A673 (cell line): ENCODE measurements at regions of chr4 and their contacts with region 1.

Region 1: GRCh38 chr4:47562297-47562696 is 77.2 kb downstream of the ATP10D start:
- DNase-seq: no peak
- H3K4me3 ChIP-seq: no peak overlapping the region
- H3K27ac ChIP-seq: no peak overlapping the region
- H3K4me1 ChIP-seq: no peaks in the 10 kb centered on the region
- H3K27me3 ChIP-seq: no peaks in the 10 kb centered on the region
- CTCF ChIP-seq: no peak

Region 2: GRCh38 chr4:46844325-46844917 is 717.9 kb before region 1 on chr4:
- CTCF ChIA-PET with region 1: no interaction called
- POLR2A ChIA-PET with region 1: no interaction called
- intact Hi-C with region 1: loop called (anchors 10 kb)
- DNase-seq: peak; percentile 79
- H3K4me3 ChIP-seq: no peak overlapping the region
- H3K27ac ChIP-seq: no peak overlapping the region
- H3K4me1 ChIP-seq: no peaks in the 10 kb centered on the region
- H3K27me3 ChIP-seq: no peaks in the 10 kb centered on the region
- CTCF ChIP-seq: peak; percentile 81

Region 3: GRCh38 chr4:46931981-46932380 is 630.3 kb before region 1 on chr4:
- CTCF ChIA-PET with region 1: no interaction called
- POLR2A ChIA-PET with region 1: no interaction called
- intact Hi-C with region 1: loop called (anchors 5 kb)
- DNase-seq: peak; percentile 67
- H3K4me3 ChIP-seq: no peak overlapping the region
- H3K27ac ChIP-seq: no peak overlapping the region
- H3K4me1 ChIP-seq: no peaks in the 10 kb centered on the region
- H3K27me3 ChIP-seq: peaks cover 28% of the 10 kb centered on the region
- CTCF ChIP-seq: peak; percentile 79

Region 4: DNA sequence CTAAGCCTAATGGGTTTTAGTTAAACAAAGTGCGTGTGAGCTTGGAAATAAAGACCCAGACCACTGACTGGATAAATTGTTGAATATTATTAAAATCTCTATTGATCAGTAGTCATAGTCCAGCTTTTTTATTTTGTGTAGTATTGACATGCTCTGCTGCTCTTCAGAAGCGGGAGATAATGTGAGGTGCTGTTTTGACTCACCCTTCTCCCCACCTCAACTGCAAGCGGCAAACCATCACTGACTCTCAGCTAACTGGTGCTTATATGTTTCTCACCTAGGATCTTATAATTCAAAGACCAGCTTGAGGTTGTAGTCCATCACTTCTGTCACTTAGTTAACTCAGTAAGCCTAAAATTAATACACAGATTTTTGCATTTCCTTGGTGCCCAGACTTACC is 171.0 kb before region 1 on chr4:
- CTCF ChIA-PET with region 1: no interaction called
- POLR2A ChIA-PET with region 1: no interaction called
- intact Hi-C with region 1: loop called (anchors 5 kb)
- DNase-seq: no peak
- H3K4me3 ChIP-seq: no peak overlapping the region
- H3K27ac ChIP-seq: no peak overlapping the region
- H3K4me1 ChIP-seq: no peaks in the 10 kb centered on the region
- H3K27me3 ChIP-seq: no peaks in the 10 kb centered on the region
- CTCF ChIP-seq: no peak

Region 5: DNA sequence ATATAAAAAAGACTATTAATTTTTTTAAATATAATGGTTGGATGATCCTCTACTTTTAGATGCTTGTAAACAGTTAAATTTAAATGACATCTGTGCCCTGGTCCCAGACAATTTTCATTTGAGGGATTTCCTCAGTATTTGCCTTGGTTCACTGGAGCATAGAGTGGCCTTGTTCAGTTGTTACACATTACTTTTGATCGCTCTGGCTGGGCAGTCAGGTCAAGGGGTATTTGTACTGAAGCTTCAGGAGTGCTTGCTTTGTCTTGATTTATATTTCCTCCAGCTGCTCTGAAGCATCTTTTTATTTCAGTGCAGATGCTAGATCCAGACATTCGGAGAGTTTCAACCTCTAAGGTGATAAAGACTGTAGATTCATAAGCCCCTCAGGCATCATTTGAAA is 148.8 kb before region 1 on chr4:
- CTCF ChIA-PET with region 1: no interaction called
- POLR2A ChIA-PET with region 1: no interaction called
- intact Hi-C with region 1: no loop called
- DNase-seq: no peak
- H3K4me3 ChIP-seq: no peak overlapping the region
- H3K27ac ChIP-seq: no peak overlapping the region
- H3K4me1 ChIP-seq: no peaks in the 10 kb centered on the region
- H3K27me3 ChIP-seq: peaks cover 13% of the 10 kb centered on the region
- CTCF ChIP-seq: no peak

Region 6: GRCh38 chr4:47617607-47618006 is 55.3 kb after region 1 on chr4:
- CTCF ChIA-PET with region 1: no interaction called
- POLR2A ChIA-PET with region 1: no interaction called
- intact Hi-C with region 1: no loop called
- DNase-seq: no peak
- H3K4me3 ChIP-seq: no peak overlapping the region
- H3K27ac ChIP-seq: no peak overlapping the region
- H3K4me1 ChIP-seq: no peaks in the 10 kb centered on the region
- H3K27me3 ChIP-seq: no peaks in the 10 kb centered on the region
- CTCF ChIP-seq: no peak